Ascending aorta (tissue), 2 donors: ENCODE measurements at regions of chr17 and their contacts with region 1.

Region 1: GRCh38 chr17:79991140-79991923 is 44.3 kb downstream of the TBC1D16 start:
- DNase-seq: peak in 1 of 2 donors; percentile 78
- H3K4me3 ChIP-seq: peak overlapping the region; percentile 44 to 54
- H3K27ac ChIP-seq: no peak overlapping the region
- H3K4me1 ChIP-seq: peaks cover 5 to 13% of the 10 kb centered on the region in 2 donors
- H3K27me3 ChIP-seq: no peaks in the 10 kb centered on the region
- CTCF ChIP-seq: peak; percentile 35 to 69 (median 62)

Region 2: GRCh38 chr17:79741751-79742588 is 249.4 kb before region 1 on chr17:
- intact Hi-C with region 1: loop called (anchors 2 kb)
- DNase-seq: peak in 1 of 2 donors; percentile 79
- H3K4me3 ChIP-seq: peak overlapping the region in 1 of 2 donors; percentile 9
- H3K27ac ChIP-seq: no peak overlapping the region
- H3K4me1 ChIP-seq: peaks cover 0 to 6% of the 10 kb centered on the region in 2 donors
- H3K27me3 ChIP-seq: peaks cover 12% of the 10 kb centered on the region
- CTCF ChIP-seq: peak; percentile 80 to 99 (median 97)

Region 3: GRCh38 chr17:79789534-79790353 is 201.6 kb before region 1 on chr17:
- intact Hi-C with region 1: loop called (anchors 2 kb)
- DNase-seq: no peak
- H3K4me3 ChIP-seq: no peak overlapping the region
- H3K27ac ChIP-seq: no peak overlapping the region
- H3K4me1 ChIP-seq: peaks cover 4 to 12% of the 10 kb centered on the region in 2 donors
- H3K27me3 ChIP-seq: peaks cover 46% of the 10 kb centered on the region
- CTCF ChIP-seq: peak; percentile 54 to 76 (median 61)